ENCODE measurements at regions of chr6 and their contacts with region 1.

Region 1: GRCh38 chr6:117555882-117556498 is 46.3 kb downstream of the GOPC start:
- DNase-seq: peak; percentile 27
- ATAC-seq: peak; percentile 21; the same call in 1 of the 3 replicates
- H3K4me3 ChIP-seq: no peak overlapping the region
- H3K27ac ChIP-seq: no peak overlapping the region
- H3K4me1 ChIP-seq: peaks cover 6% of the 10 kb centered on the region; the same call in 1 of the 2 replicates
- H3K27me3 ChIP-seq: no peaks in the 10 kb centered on the region
- CTCF ChIP-seq: peak; percentile 72
- EP300 ChIP-seq: no peak
- POLR2A ChIP-seq: no peak
- RAD21 ChIP-seq: peak; percentile 56

Region 2: DNA sequence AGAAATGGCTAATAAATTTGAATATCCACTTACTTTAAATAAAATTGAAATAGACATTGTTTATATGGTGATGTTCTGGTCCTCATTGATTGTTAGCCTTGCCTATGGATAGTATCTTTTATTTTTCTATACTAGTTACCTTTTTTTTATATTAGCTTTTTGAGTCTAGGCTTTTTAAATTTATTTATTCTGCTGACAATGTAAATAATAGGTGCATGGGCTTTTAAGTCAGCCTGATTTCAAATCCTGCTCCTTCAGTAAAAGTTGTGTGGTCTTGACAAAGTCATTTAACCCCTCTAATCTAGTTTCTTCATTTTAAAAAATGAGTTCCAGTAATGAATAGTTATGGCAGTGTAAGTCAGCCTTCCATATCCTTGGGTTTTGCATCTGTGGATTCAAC is 829.0 kb before region 1 on chr6:
- CTCF ChIA-PET with region 1: no interaction called
- POLR2A ChIA-PET with region 1: no interaction called
- in situ Hi-C with region 1: no loop called
- intact Hi-C with region 1: no loop called
- DNase-seq: no peak
- ATAC-seq: no peak
- H3K4me3 ChIP-seq: no peak overlapping the region
- H3K27ac ChIP-seq: no peak overlapping the region
- H3K4me1 ChIP-seq: no peaks in the 10 kb centered on the region
- H3K27me3 ChIP-seq: no peaks in the 10 kb centered on the region
- CTCF ChIP-seq: no peak
- EP300 ChIP-seq: no peak
- POLR2A ChIP-seq: no peak
- RAD21 ChIP-seq: no peak

Region 3: GRCh38 chr6:117346142-117346930 is 209.7 kb before region 1 on chr6:
- CTCF ChIA-PET with region 1: interaction called, 10 read pairs
- POLR2A ChIA-PET with region 1: no interaction called
- in situ Hi-C with region 1: no loop called
- intact Hi-C with region 1: loop called (anchors 1 kb)
- DNase-seq: peak; percentile 23
- ATAC-seq: no peak
- H3K4me3 ChIP-seq: no peak overlapping the region
- H3K27ac ChIP-seq: no peak overlapping the region
- H3K4me1 ChIP-seq: no peaks in the 10 kb centered on the region; the same call in 1 of the 2 replicates
- H3K27me3 ChIP-seq: no peaks in the 10 kb centered on the region
- CTCF ChIP-seq: peak; percentile 36; the same call in 1 of the 2 replicates
- EP300 ChIP-seq: no peak
- POLR2A ChIP-seq: no peak
- RAD21 ChIP-seq: 0 out of 2 replicates have a peak, but pooled peaks have one; percentile 11

Region 4: DNA sequence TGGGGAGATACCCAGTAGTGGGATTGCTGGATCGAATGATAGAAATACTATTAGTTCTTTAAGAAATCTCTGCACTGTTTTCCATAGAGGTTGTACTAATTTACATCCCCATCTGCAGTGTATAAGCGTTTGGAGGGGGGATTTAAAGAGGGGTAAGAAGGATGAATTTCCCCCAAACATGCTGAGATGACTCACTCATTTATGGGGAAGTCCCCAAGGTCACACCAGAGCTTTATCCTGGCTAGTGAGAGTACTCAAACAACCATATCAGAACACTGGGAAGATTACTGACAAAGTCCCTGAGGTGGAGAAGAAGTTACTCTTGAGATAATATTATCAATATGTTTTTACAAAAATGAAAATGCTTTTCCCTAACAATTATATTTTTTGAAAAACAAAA is 174.2 kb before region 1 on chr6:
- CTCF ChIA-PET with region 1: no interaction called
- POLR2A ChIA-PET with region 1: no interaction called
- in situ Hi-C with region 1: no loop called
- intact Hi-C with region 1: no loop called
- DNase-seq: no peak
- ATAC-seq: no peak
- H3K4me3 ChIP-seq: no peak overlapping the region
- H3K27ac ChIP-seq: no peak overlapping the region
- H3K4me1 ChIP-seq: no peaks in the 10 kb centered on the region
- H3K27me3 ChIP-seq: no peaks in the 10 kb centered on the region
- CTCF ChIP-seq: no peak
- EP300 ChIP-seq: no peak
- POLR2A ChIP-seq: no peak
- RAD21 ChIP-seq: no peak

Region 5: GRCh38 chr6:117399924-117400323 is 156.1 kb before region 1 on chr6:
- CTCF ChIA-PET with region 1: no interaction called
- POLR2A ChIA-PET with region 1: no interaction called
- in situ Hi-C with region 1: no loop called
- intact Hi-C with region 1: loop called (anchors 1 kb)
- DNase-seq: peak; percentile 20
- ATAC-seq: peak; percentile 81
- H3K4me3 ChIP-seq: no peak overlapping the region
- H3K27ac ChIP-seq: no peak overlapping the region
- H3K4me1 ChIP-seq: peaks cover 7% of the 10 kb centered on the region; the same call in 1 of the 2 replicates
- H3K27me3 ChIP-seq: no peaks in the 10 kb centered on the region
- CTCF ChIP-seq: peak; percentile 51
- EP300 ChIP-seq: no peak
- POLR2A ChIP-seq: no peak
- RAD21 ChIP-seq: no peak

Region 6: DNA sequence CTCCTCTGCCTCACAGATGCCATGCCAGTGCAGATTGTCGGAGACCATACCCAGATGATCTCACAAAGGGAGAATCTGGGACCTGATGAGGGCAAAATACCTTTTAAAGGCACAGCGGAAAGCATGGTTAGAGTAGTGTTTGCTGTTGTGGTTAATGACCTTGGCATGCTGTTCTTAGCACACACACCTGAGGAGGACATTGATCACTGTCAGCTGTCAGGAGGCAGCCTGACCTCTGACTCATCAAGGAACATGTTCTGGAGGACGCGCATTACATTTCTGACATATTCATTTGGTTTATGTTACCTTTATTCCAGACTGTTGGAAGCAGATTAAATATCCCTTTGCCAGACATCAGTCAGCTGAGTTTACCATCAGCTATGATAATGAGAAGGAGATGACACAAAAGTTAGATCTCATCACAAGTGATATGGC is 10.8 kb before region 1 on chr6:
- CTCF ChIA-PET with region 1: no interaction called
- POLR2A ChIA-PET with region 1: no interaction called
- in situ Hi-C with region 1: no loop called
- intact Hi-C with region 1: no loop called
- DNase-seq: peak; percentile 85
- ATAC-seq: peak; percentile 84
- H3K4me3 ChIP-seq: no peak overlapping the region
- H3K27ac ChIP-seq: peak overlapping the region; percentile 14
- H3K4me1 ChIP-seq: peaks cover 31% of the 10 kb centered on the region
- H3K27me3 ChIP-seq: no peaks in the 10 kb centered on the region
- CTCF ChIP-seq: no peak
- EP300 ChIP-seq: peak in 1 of 2 experiments; percentile 71; a peak in 2 of 4 replicates
- POLR2A ChIP-seq: no peak
- RAD21 ChIP-seq: no peak

Region 7: DNA sequence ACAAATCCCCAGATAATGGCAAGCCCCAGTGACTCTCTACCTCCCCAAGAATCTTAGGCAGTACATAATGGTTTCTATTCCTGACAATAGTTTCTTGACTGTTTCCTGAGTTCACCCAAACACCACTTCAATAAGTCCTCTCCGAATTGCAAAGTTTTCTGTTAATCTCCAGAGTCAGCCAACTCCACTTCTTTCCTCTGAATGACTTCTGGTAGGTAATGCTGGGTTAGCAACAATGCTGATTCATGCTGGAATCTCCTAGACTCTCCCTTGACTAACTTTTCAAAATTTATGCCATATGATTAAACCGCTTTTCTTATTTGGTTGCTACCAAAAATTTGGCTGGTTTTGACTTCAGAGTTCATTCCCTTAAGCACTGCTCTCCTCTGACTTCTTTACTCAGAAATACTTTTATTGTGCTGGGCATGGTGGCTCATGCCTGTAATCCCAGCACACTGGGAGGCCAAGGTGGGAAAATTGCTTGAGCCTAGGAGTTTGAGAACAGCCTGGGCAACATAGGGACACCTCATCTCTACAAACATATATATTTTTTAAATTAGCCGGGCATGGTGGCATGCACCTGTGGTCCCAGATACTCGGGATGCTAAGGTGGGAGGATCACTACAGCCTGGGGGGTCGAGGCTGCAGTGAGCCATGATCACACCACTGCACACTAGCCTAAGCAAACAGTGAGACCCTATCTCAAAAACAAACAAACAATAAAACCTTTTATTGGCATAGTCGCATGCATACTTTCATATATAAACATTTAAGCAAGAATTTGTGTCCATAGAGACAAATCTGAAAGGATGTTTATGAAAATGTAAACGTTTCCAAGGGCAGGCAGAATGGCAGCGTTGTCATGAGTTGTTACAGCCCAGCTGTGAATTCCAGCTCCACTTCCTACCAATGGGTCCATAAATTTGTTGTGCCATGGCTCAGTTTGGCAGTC is 742.8 kb after region 1 on chr6:
- CTCF ChIA-PET with region 1: no interaction called
- POLR2A ChIA-PET with region 1: no interaction called
- in situ Hi-C with region 1: no loop called
- intact Hi-C with region 1: no loop called
- DNase-seq: no peak
- ATAC-seq: no peak
- H3K4me3 ChIP-seq: no peak overlapping the region
- H3K27ac ChIP-seq: no peak overlapping the region
- H3K4me1 ChIP-seq: no peaks in the 10 kb centered on the region
- H3K27me3 ChIP-seq: no peaks in the 10 kb centered on the region
- CTCF ChIP-seq: no peak
- EP300 ChIP-seq: no peak
- POLR2A ChIP-seq: no peak
- RAD21 ChIP-seq: no peak

Measured in HepG2 (cell line).